Posterior cingulate gyrus (tissue), 11 donors: ENCODE measurements at regions of chr2 and their contacts with region 1.

Region 1: DNA sequence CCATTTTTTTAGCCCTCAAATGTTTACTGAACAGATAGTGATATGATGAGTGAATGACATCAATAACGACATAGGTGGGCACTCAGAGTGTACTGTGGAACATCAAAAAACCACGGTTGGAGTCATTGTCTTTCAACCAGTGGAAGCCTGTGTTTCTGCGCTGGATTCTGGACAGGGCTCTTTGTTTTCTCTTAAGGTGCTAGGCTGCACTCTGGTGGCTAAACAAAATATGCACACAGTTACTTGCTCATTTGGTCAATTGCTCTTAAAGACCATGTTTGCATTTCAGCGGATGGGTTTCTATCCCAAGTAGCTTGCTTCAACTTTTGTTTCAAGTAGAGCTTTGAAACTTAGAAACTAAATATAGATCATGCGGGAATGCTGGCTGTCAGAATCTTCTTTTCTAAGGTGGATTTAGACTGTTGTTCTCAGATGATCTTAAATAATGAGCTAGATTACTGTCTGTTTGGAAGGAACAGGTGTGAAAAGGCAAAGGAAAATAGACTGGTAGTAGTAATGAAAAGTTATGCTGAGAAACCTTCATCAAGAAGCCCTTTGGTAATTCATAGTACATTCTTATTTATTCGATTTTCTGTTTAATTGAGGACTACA is 48.5 kb upstream of the LYPD6B start:
- DNase-seq: peak in 4 of 10 donors; percentile 35 to 64 (median 56)

Region 2: DNA sequence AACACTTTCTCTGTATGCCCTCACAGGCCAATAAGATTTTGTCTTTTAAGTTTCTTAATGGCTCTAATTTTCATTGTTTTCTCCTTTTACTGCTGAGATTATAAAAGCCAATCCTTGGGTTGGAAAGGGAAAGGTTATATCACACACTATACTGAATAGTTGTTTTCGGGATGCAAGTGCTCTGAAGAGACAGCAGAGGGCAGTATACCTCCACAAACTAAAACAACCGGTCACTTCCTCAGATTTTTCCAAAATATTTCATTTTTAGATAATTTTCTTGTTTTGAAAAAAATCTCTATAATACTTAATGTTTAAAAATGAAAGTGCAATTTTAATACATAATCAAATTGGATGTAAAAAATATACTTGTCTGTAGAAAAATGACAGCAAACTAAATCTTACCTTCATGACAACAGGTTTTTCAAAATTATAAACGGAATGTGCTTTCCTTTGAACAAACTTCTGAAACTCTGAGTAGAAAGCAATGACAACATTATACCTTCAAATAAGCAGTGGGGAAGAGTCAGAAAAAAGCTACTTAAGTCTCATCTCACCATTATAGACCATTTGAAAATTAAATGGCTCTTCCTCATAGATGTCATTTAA is 1052.1 kb before region 1 on chr2:
- intact Hi-C with region 1: loop called (anchors 10 kb)
- DNase-seq: no peak

Region 3: GRCh38 chr2:148644883-148645538 is 345.0 kb before region 1 on chr2:
- intact Hi-C with region 1: loop called (anchors 2 kb)
- DNase-seq: peak; percentile 87 to 99 (median 95)

Region 4: DNA sequence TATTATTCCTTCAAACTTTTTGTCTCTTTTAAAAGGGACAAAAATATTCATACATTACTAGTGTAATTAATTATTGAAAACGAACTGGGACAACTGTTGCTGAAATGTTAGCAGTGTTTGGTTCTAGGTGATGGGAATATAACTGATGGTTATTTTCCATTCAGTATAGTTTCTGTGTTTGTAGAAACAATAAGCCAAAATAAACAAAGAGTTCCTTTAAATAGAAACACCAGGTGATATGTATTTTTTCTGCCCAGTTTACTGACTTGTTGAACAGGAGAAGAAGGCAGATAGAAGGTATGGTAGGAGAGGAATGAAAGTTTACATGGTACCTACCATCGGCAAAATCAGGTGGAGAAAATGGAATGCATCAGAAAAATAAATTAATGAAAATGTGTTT is 122.7 kb after region 1 on chr2:
- intact Hi-C with region 1: no loop called
- DNase-seq: no peak